AG04450 (cell line): ENCODE measurements at regions of chr5 and their contacts with region 1.

Region 1: DNA sequence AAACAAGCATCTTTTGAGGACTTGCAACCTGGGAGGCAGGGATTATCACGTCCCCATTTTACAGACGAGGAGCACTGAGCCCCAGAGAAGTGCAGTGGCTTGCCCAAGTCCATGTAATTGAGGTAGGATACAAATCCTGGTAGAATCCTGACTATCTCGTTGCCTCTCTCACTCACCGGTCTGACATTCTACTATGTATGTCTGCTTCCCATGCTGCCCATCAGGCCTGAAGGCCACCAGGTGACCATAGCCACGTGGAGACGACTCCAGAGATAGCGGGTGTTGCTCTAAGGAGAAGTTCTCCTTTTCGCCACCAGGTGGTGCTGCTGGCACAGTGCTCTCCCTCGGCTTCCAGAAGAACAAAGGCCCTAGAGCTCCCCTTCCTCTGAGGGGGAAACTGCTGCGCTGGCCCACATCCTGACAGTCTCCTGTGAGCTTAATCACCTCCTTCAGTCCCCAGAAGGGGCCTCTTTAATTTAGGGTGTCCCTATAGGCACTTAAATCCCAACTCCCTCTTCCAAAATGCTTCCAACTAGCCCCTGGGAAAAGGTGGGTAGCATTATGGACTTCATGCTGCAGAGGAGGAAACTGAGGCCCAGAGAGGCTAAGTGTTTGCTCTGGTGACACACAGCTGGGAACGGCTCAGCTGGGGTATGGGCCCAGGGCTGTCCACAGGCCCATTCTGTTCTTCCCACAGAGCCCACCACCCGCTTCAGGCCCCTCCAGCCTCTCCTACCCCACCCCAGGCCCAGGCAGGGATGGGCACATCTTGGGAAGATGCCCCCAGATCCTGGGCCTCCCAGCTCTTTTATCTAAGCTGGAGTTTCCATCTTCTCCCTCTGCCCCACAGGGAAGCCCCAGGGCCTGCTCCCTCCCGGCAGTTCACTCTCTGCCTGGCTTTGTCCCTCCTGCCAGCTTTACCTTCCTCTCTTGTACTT is 6.4 kb downstream of the SLC34A1 start:
- DNase-seq: no peak
- H3K4me3 ChIP-seq: no peak overlapping the region
- H3K27ac ChIP-seq: peak overlapping the region; percentile 89
- H3K27me3 ChIP-seq: peaks cover 20% of the 10 kb centered on the region
- CTCF ChIP-seq: peak; percentile 95

Region 2: DNA sequence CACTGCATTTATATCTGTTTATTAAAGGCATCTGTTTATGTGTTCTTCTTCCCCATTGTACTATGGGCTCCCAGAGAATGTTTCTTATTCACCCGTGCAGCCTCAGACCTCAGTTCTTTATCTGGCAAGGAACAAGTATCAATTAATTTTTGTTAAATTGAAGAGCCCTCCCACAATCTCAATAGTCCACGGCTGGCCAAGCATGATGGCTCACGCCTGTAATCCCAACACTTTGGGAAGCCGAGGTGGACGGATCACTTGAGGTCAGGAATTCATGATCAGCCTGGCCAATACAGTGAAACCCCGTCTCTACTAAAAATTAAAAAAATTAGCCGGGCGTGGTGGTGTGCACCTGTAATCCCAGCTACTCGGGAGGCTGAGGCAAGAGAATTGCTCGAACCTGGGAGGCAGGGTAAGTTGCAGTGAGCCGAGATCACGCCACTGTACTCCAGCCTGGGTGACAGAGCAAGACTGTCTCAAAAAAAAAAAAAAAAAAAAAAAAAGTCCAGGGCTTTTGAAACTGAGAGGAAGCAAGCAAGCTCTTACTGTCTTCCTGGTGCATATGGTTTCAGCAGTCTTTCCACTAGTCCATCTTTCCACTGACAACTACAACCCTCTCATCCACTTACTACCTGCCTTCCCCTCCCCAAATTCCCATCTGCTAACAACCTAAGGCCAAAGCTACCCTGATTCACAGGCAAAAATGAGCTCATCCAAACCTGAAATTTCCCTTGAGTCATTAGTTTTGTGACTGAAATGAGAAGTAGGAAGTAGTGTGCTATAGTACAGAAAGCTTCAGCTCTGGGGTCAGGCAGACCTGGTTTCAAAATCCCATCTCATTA is 489.2 kb before region 1 on chr5:
- CTCF ChIA-PET with region 1: no interaction called
- POLR2A ChIA-PET with region 1: no interaction called
- DNase-seq: no peak
- H3K4me3 ChIP-seq: no peak overlapping the region
- H3K27ac ChIP-seq: no peak overlapping the region
- H3K27me3 ChIP-seq: peaks cover 5% of the 10 kb centered on the region
- CTCF ChIP-seq: no peak

Region 3: DNA sequence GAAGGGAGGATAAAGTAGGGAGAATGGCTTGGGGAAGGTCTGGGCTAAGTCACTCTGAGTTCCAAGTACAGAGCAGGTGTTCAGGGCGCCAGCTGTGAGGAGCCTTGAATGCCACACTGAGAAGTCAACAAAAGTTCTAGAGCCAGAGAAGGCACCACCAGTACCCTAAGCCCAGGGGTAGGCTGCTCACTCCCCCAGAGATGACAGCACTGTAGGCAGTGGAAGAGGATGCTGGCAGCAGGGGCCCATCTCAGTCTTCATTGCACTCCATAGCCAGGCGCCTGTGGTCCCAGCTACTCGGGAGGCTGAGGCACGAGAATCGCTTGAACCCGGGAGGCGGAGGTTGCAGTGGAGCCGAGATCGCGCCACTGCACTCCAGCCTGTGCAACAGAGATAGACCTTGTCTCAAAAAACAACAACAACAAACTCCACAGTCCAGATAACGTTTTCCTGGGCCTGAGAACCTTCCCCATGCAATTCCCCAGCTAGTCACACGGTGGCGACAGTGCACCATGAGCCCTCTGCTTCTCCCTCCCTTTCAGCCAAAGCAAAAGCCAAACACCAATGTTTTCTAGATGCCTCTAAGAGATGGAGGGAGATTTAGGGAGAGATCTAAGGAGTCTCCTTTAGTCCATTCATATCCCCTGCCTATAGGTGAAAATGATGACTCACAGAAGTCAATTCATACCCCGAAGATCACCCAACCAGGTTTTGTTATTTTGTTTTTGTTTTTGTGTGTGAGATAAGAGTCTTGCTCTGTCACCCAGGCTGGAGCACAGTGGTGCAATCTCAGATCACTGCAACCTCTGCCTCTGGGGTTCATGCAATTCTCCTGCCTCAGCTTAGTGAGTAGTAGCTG is 276.8 kb before region 1 on chr5:
- CTCF ChIA-PET with region 1: interaction called, 19 read pairs
- POLR2A ChIA-PET with region 1: no interaction called
- DNase-seq: no peak
- H3K4me3 ChIP-seq: no peak overlapping the region
- H3K27ac ChIP-seq: no peak overlapping the region
- H3K27me3 ChIP-seq: no peaks in the 10 kb centered on the region
- CTCF ChIP-seq: peak; percentile 100

Region 4: GRCh38 chr5:177378884-177379883 is 11.4 kb before region 1 on chr5:
- CTCF ChIA-PET with region 1: interaction called, 57 read pairs
- POLR2A ChIA-PET with region 1: interaction called, 5 read pairs
- DNase-seq: peak; percentile 82
- H3K4me3 ChIP-seq: no peak overlapping the region
- H3K27ac ChIP-seq: peak overlapping the region; percentile 81
- H3K27me3 ChIP-seq: peaks cover 12% of the 10 kb centered on the region
- CTCF ChIP-seq: no peak

Region 5: GRCh38 chr5:177419051-177419450 is 28.4 kb after region 1 on chr5:
- CTCF ChIA-PET with region 1: interaction called, 13 read pairs
- POLR2A ChIA-PET with region 1: no interaction called
- DNase-seq: peak; percentile 74
- H3K4me3 ChIP-seq: no peak overlapping the region
- H3K27ac ChIP-seq: no peak overlapping the region
- H3K27me3 ChIP-seq: no peaks in the 10 kb centered on the region
- CTCF ChIP-seq: no peak

Region 6: DNA sequence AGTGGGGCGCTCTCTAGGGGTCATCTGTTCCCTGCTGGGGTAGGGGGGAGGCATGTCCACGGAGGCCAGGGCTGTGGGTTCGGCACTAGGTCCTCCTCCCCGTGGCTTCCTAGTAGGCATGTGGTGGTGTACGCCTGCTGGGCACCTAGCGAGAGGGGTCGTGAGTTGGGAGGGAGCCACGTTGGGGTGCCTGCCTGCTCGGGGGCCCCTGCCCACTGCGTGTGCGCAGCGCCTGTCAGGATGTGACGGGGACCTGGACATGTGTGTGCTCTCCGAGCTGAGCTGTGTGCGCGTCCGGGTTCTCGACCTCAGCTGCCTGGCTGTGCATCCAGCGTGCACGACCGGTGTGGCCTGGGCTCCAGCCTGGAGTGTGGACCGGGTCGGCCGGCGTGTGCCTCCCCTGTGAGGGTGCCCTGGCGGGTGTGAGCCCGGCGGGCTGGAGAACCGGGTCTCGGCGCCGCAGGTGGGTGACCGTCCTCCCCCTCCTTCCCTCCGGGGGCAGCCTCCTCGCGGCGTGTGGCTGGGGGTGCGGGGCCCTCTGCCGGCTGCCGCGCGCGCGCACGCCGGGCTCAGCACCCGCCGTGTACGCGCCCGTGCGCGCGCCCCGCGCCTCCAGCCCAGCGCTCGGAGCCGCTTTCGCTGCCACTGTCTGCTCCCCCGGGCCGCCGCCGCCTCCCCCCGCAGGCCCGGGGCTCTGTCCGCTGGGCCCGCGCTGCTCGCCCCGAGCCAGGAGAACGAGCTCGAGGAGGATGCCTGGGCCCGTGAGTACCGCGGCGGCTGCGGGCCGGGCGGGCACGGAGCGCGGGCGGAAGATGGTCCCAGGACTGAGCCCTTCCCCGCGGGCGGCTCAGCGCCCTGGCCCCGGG is 55.8 kb after region 1 on chr5 and contains the start of gene PRR7:
- CTCF ChIA-PET with region 1: interaction called, 205 read pairs
- POLR2A ChIA-PET with region 1: interaction called, 12 read pairs
- DNase-seq: no peak
- H3K4me3 ChIP-seq: peak within 1 kb of the TSS; percentile 73
- H3K27ac ChIP-seq: peak within 1 kb of the TSS; percentile 39
- H3K27me3 ChIP-seq: no peaks in the 10 kb centered on the region
- CTCF ChIP-seq: no peak
- polyA plus RNA-seq, gene PRR7: 1.0 and 1.6 TPM in 2 replicates

Region 7: GRCh38 chr5:177473461-177474001 is 82.9 kb after region 1 on chr5 and contains the start of gene DBN1:
- CTCF ChIA-PET with region 1: interaction called, 12 read pairs
- POLR2A ChIA-PET with region 1: interaction called, 5 read pairs
- DNase-seq: no peak
- H3K4me3 ChIP-seq: peak within 1 kb of the TSS; percentile 92
- H3K27ac ChIP-seq: peak within 1 kb of the TSS; percentile 68
- H3K27me3 ChIP-seq: no peaks in the 10 kb centered on the region
- CTCF ChIP-seq: no peak
- polyA plus RNA-seq, gene DBN1: 146 and 164 TPM in 2 replicates

Region 8: DNA sequence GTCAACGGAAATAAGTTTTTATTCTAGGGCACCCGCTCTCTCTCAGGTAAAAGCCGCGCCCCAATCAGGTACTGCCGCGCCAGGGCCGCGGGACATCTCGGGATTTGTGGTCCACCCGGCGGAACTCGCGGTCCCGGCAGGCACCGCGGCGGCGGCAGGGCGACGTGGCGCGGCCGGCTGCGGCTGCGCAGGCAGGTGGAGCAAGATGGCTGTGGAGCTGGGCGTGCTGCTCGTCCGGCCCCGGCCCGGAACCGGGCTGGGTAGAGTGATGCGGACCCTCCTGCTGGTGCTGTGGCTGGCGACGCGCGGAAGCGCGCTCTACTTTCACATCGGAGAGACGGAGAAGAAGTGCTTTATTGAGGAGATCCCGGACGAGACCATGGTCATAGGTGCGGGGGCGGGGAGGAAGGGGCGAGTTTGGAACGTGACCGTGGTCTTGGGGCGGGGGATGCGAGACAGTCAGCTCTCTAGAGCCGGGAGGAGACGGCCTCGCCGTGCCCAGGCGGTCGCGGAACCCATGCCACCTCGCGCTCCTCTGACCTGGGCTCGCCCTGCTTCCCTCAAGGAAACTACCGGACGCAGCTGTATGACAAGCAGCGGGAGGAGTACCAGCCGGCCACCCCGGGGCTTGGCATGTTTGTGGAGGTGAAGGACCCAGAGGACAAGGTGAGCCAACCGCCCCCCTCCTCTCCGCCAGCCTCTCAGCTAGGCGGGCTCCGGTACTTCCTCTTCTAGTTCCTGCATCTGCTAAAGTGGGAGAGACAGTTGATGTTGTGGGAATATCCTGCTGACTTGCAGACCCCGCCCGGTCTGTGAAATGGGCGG is 201.6 kb after region 1 on chr5 and contains the start of gene TMED9:
- CTCF ChIA-PET with region 1: no interaction called
- POLR2A ChIA-PET with region 1: no interaction called
- DNase-seq: peak; percentile 29
- H3K4me3 ChIP-seq: peak within 1 kb of the TSS; percentile 95
- H3K27ac ChIP-seq: peak within 1 kb of the TSS; percentile 88
- H3K27me3 ChIP-seq: peaks cover 10% of the 10 kb centered on the region
- CTCF ChIP-seq: no peak
- polyA plus RNA-seq, gene TMED9: 307 and 376 TPM in 2 replicates